AG04449 (cell line): ENCODE measurements at regions of chr4 and their contacts with region 1.

Region 1: GRCh38 chr4:110567214-110567613 is 55.7 kb downstream of the PITX2 start:
- DNase-seq: no peak
- H3K4me3 ChIP-seq: no peak overlapping the region
- CTCF ChIP-seq: no peak

Region 2: GRCh38 chr4:110165382-110166285 is 401.6 kb before region 1 on chr4:
- CTCF ChIA-PET with region 1: no interaction called
- POLR2A ChIA-PET with region 1: no interaction called
- DNase-seq: no peak
- H3K4me3 ChIP-seq: no peak overlapping the region
- CTCF ChIP-seq: no peak

Region 3: GRCh38 chr4:110586131-110586850 is 19.1 kb after region 1 on chr4:
- CTCF ChIA-PET with region 1: interaction called, 14 read pairs
- POLR2A ChIA-PET with region 1: no interaction called
- DNase-seq: peak; percentile 44
- H3K4me3 ChIP-seq: no peak overlapping the region
- CTCF ChIP-seq: peak; percentile 25